Natural killer cell (primary cell): ENCODE measurements at regions of chr6 and their contacts with region 1.

Region 1: DNA sequence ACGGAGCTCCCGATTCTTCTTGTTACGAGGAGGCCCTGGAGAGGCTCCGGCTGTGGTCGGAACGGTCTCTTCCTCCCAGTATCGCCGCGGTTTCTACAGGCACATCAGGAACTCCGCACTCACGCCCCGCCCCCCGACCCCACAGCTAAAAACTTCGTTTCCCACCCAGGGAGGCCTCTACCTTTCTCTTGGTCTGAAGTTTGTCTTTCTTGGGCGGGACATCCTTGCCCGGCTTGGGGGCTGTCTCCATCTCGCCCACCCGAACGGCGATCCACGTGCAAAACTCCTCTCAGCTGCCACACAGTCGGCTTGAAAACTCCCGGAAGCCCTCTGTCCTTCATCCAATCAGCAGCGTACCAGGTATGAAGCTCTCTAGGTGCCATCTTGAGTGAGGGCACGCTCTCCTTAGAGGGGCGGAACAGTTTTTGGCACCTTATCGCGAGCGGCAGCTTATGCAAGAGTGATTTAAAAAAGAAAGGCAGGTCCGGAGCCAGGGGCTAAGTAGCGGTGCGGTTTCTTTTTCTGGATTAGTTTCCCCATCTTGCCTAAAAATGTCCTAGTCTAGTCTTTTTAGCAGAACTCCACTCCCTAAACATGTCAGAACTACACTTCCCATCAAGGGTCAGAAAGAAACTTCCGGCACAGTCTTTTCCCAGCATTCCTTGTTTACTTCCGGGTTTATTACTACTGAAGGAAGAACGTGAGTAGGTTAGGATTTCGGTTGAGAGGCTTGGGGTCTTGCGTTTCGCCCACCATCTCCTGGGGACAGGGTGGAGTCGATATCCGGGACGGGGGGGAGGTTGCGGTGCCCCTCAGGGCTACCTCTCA is at the starts of genes PFDN6 and WDR46:
- DNase-seq: peak; percentile 78 to 92
- ATAC-seq: peak; percentile 95 to 96 (median 96)
- H3K4me3 ChIP-seq: peak within 1 kb of the TSS; percentile 81
- H3K4me3 Mint-ChIP-seq: peak within 1 kb of the TSS; percentile 99
- H3K27ac ChIP-seq: peak within 1 kb of the TSS; percentile 51
- H3K27ac Mint-ChIP-seq: peak within 1 kb of the TSS; percentile 92 to 94
- H3K4me1 ChIP-seq: peaks cover 23% of the 10 kb centered on the region
- H3K4me1 Mint-ChIP-seq: peaks cover 39 to 48% of the 10 kb centered on the region in 2 donors
- H3K27me3 ChIP-seq: no peaks in the 10 kb centered on the region
- H3K27me3 Mint-ChIP-seq: no peaks in the 10 kb centered on the region
- CTCF ChIP-seq: no peak
- total RNA-seq, gene PFDN6: 19.2 to 26.5 (median 22.7) TPM
- total RNA-seq, gene WDR46: 33.6 to 56.3 (median 47.0) TPM

Region 2: DNA sequence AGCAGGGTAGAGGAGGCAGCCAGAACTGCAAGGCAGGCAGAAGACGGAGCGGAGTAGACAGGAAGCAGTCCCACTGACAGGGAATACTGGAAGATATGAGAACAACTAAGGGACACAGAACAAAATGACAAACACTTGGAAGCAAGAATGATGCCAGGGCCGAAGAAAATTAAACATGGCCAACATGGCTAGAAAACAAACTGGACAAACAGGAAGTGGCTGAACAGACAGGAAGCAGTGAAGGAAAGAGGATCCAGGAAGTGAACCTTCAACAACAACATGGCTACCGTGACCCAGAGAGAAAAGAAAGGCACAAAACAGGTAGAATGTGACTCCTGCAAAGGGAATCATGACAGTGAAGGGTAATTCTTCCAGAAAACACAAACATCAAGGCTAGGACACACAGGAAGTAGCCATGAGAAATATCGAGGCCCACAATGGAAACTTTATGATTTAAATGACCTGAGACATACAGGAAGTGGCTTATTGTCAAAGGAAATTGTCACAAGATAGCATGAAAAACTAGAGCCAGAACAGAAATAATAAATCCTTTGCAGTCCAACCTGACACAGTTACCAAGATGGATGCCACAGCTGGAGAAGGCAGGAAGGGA is 106.0 kb before region 1 on chr6:
- intact Hi-C with region 1: no loop called
- DNase-seq: peak in 1 of 2 donors; percentile 35
- ATAC-seq: peak; percentile 37 to 78 (median 57)
- H3K4me3 ChIP-seq: no peak overlapping the region
- H3K4me3 Mint-ChIP-seq: peak overlapping the region; percentile 64
- H3K27ac ChIP-seq: peak overlapping the region; percentile 52
- H3K27ac Mint-ChIP-seq: peak overlapping the region; percentile 83 to 90
- H3K4me1 ChIP-seq: peaks cover 14% of the 10 kb centered on the region
- H3K4me1 Mint-ChIP-seq: peaks cover 15 to 24% of the 10 kb centered on the region in 2 donors
- H3K27me3 ChIP-seq: peaks cover 7% of the 10 kb centered on the region
- H3K27me3 Mint-ChIP-seq: peaks cover 11 to 22% of the 10 kb centered on the region in 2 donors
- CTCF ChIP-seq: no peak

Region 3: GRCh38 chr6:33271458-33272274 is 17.5 kb before region 1 on chr6 and contains the starts of genes RPS18 and VPS52:
- intact Hi-C with region 1: loop called (anchors 1 kb)
- DNase-seq: peak; percentile 83 to 99
- ATAC-seq: peak; percentile 86 to 95 (median 91)
- H3K4me3 ChIP-seq: peak within 1 kb of the TSS; percentile 71
- H3K4me3 Mint-ChIP-seq: peak within 1 kb of the TSS; percentile 96
- H3K27ac ChIP-seq: peak within 1 kb of the TSS; percentile 89
- H3K27ac Mint-ChIP-seq: peak within 1 kb of the TSS; percentile 97 to 98
- H3K4me1 ChIP-seq: peaks cover 40% of the 10 kb centered on the region
- H3K4me1 Mint-ChIP-seq: peaks cover 57 to 63% of the 10 kb centered on the region in 2 donors
- H3K27me3 ChIP-seq: no peaks in the 10 kb centered on the region
- H3K27me3 Mint-ChIP-seq: no peaks in the 10 kb centered on the region
- CTCF ChIP-seq: no peak
- total RNA-seq, gene RPS18: 1,182 to 1,707 (median 1,500) TPM
- total RNA-seq, gene VPS52: 98.0 to 112 (median 99.4) TPM

Region 4: DNA sequence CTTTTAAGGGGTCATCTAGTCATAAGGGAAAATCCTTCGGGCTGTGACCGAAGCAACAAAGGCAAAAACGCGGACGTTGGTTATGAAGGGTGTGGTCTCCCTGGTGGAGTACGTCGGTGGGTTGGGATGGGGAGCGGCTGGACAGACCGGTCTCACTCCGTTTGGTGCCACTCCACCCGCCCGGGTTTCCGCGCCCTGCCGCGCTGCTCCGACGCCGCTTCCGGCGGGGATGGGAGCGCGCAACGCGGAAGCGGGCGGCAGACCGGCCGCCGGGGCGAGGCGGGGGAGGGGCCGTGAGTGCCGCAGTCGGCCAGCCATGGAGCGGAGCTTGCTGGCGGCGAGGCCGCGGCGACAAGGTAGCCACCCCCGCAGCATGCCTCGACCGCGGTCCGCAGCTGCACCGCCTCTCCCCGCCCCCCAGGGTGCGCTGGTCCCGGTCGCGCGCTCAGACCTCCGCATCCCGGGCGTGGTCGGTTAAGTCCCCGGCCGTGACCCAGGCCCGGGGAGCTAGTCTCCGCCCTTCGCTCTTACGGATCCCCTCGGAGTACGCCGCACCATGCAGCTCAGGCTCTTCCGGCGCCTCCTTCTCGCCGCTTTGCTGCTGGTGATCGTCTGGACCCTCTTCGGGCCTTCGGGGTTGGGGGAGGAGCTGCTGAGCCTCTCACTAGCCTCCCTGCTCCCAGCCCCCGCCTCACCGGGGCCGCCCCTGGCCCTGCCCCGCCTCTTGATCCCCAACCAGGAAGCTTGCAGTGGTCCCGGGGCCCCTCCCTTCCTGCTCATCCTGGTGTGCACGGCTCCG is 12.1 kb before region 1 on chr6 and contains the start of gene B3GALT4:
- intact Hi-C with region 1: loop called (anchors 1 kb)
- DNase-seq: peak; percentile 68 to 86
- ATAC-seq: peak; percentile 73 to 83 (median 76)
- H3K4me3 ChIP-seq: peak within 1 kb of the TSS; percentile 82
- H3K4me3 Mint-ChIP-seq: peak within 1 kb of the TSS; percentile 94
- H3K27ac ChIP-seq: peak within 1 kb of the TSS; percentile 90
- H3K27ac Mint-ChIP-seq: peak within 1 kb of the TSS; percentile 90 to 91
- H3K4me1 ChIP-seq: peaks cover 63% of the 10 kb centered on the region
- H3K4me1 Mint-ChIP-seq: peaks cover 48 to 71% of the 10 kb centered on the region in 2 donors
- H3K27me3 ChIP-seq: no peaks in the 10 kb centered on the region
- H3K27me3 Mint-ChIP-seq: no peaks in the 10 kb centered on the region
- CTCF ChIP-seq: peak; percentile 61
- total RNA-seq, gene B3GALT4: 22.7 to 24.1 (median 23.1) TPM

Region 5: DNA sequence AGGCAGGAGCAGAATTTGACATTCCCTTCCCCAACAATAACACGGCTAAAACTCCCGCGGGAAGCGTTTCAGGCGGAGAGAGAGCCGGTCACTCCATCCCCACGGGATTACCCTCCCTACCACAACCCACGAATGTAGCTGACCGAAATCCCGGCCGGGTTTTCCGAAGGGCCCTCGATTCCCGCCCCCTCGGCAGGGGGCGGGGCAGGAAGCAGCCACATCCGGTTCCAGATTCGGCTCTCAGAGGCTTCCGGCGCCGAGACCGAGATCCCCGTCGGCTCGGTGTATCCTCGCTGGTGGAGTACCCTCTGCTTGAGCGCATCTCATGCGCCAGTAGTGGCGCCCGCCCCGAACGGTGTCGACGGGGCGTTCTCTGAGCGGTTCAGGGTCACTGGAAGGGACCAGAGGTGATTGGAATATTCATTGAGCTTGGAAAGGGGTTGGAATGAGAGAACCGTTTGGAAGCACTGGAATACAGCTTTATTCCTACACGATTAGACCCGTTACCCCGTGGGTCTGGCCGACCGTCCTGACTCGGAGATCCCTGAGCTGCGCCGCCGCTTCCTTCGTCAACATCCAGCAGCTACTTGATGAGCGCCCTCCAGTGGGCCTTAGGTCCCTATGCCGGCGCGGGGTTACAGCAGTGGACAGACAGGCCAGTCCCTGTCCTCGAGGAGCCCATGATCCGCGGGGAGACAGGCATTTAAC is 10.3 kb after region 1 on chr6:
- intact Hi-C with region 1: loop called (anchors 1 kb)
- DNase-seq: peak; percentile 91 to 97
- ATAC-seq: peak; percentile 74 to 88 (median 79)
- H3K4me3 ChIP-seq: peak overlapping the region; percentile 81
- H3K4me3 Mint-ChIP-seq: peak overlapping the region; percentile 99
- H3K27ac ChIP-seq: peak overlapping the region; percentile 88
- H3K27ac Mint-ChIP-seq: peak overlapping the region; percentile 99
- H3K4me1 ChIP-seq: peaks cover 34% of the 10 kb centered on the region
- H3K4me1 Mint-ChIP-seq: peaks cover 36 to 63% of the 10 kb centered on the region in 2 donors
- H3K27me3 ChIP-seq: no peaks in the 10 kb centered on the region
- H3K27me3 Mint-ChIP-seq: no peaks in the 10 kb centered on the region
- CTCF ChIP-seq: peak; percentile 64

Region 6: DNA sequence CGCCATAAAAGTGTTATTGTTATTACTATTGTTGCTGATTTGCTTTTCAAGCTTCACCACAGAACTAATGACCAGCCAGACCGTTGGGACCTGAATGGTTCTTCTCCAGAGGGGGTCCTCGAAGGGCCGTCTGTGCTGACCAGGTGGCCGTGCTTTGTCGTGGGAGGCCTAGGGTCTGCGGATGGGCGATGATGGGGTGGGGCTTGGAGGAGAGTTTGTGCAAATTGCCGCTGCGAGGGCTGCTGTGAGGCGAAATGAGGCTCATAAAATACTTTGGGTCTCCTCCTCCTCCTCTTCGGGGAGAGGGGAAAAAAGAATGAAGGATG is 34.5 kb after region 1 on chr6:
- intact Hi-C with region 1: loop called (anchors 1 kb)
- DNase-seq: no peak
- ATAC-seq: no peak
- H3K4me3 ChIP-seq: peak overlapping the region; percentile 67
- H3K4me3 Mint-ChIP-seq: peak overlapping the region; percentile 99
- H3K27ac ChIP-seq: peak overlapping the region; percentile 85
- H3K27ac Mint-ChIP-seq: peak overlapping the region; percentile 98
- H3K4me1 ChIP-seq: peaks cover 46% of the 10 kb centered on the region
- H3K4me1 Mint-ChIP-seq: peaks cover 50 to 57% of the 10 kb centered on the region in 2 donors
- H3K27me3 ChIP-seq: no peaks in the 10 kb centered on the region
- H3K27me3 Mint-ChIP-seq: no peaks in the 10 kb centered on the region
- CTCF ChIP-seq: no peak